B cell (primary cell): ENCODE measurements at regions of chr13 and their contacts with region 1.

Region 1: GRCh38 chr13:81017513-81018152 is 676.7 kb upstream of the SPRY2 start:
- DNase-seq: peak; percentile 26
- ATAC-seq: no peak
- H3K4me3 ChIP-seq: no peak overlapping the region
- H3K4me3 Mint-ChIP-seq: no peak overlapping the region
- H3K27ac ChIP-seq: no peak overlapping the region
- H3K27ac Mint-ChIP-seq: no peak overlapping the region
- H3K4me1 ChIP-seq: no peaks in the 10 kb centered on the region
- H3K4me1 Mint-ChIP-seq: no peaks in the 10 kb centered on the region
- H3K27me3 ChIP-seq: peaks cover 0 to 2% (median 0%) of the 10 kb centered on the region in 4 experiments
- H3K27me3 Mint-ChIP-seq: no peaks in the 10 kb centered on the region
- CTCF ChIP-seq: peak; percentile 77

Region 2: GRCh38 chr13:79679334-79679733 is 1338.3 kb before region 1 on chr13:
- CTCF ChIA-PET with region 1: interaction called, 71 read pairs
- POLR2A ChIA-PET with region 1: no interaction called
- intact Hi-C with region 1: no loop called
- DNase-seq: peak; percentile 52
- ATAC-seq: peak; percentile 36
- H3K4me3 ChIP-seq: no peak overlapping the region
- H3K4me3 Mint-ChIP-seq: no peak overlapping the region
- H3K27ac ChIP-seq: no peak overlapping the region
- H3K27ac Mint-ChIP-seq: no peak overlapping the region
- H3K4me1 ChIP-seq: no peaks in the 10 kb centered on the region
- H3K4me1 Mint-ChIP-seq: no peaks in the 10 kb centered on the region
- H3K27me3 ChIP-seq: peaks cover 0 to 2% (median 0%) of the 10 kb centered on the region in 4 experiments
- H3K27me3 Mint-ChIP-seq: peaks cover 3% of the 10 kb centered on the region
- CTCF ChIP-seq: peak; percentile 86

Region 3: DNA sequence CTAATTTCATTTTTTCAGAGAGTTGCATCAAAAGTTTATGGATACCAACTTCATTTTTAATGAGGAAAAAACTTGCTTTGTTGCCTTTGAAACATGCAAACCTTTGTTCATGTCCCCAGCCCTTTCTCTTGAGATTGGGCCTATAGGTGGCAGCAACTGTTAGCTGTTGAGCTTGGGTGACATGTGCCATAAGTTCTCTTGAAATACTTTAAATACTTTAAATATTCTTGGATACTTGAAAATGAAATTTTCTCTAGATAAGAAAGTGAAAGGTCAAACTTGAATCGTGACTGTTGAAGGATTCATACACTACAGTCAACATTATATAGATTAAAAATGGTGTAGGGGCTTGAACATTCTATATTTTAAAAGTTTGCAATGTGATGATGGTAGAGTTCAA is 1241.8 kb before region 1 on chr13:
- CTCF ChIA-PET with region 1: interaction called, 9 read pairs
- POLR2A ChIA-PET with region 1: no interaction called
- intact Hi-C with region 1: loop called (anchors 2 kb)
- DNase-seq: peak; percentile 44
- ATAC-seq: no peak
- H3K4me3 ChIP-seq: no peak overlapping the region
- H3K4me3 Mint-ChIP-seq: no peak overlapping the region
- H3K27ac ChIP-seq: no peak overlapping the region
- H3K27ac Mint-ChIP-seq: no peak overlapping the region
- H3K4me1 ChIP-seq: no peaks in the 10 kb centered on the region
- H3K4me1 Mint-ChIP-seq: no peaks in the 10 kb centered on the region
- H3K27me3 ChIP-seq: no peaks in the 10 kb centered on the region
- H3K27me3 Mint-ChIP-seq: peaks cover 5% of the 10 kb centered on the region
- CTCF ChIP-seq: peak; percentile 57

Region 4: GRCh38 chr13:79973533-79973963 is 1044.1 kb before region 1 on chr13:
- CTCF ChIA-PET with region 1: interaction called, 5 read pairs
- POLR2A ChIA-PET with region 1: no interaction called
- intact Hi-C with region 1: loop called (anchors 2 kb)
- DNase-seq: peak; percentile 24
- ATAC-seq: peak; percentile 61
- H3K4me3 ChIP-seq: no peak overlapping the region
- H3K4me3 Mint-ChIP-seq: no peak overlapping the region
- H3K27ac ChIP-seq: no peak overlapping the region
- H3K27ac Mint-ChIP-seq: no peak overlapping the region
- H3K4me1 ChIP-seq: no peaks in the 10 kb centered on the region
- H3K4me1 Mint-ChIP-seq: peaks cover 2% of the 10 kb centered on the region
- H3K27me3 ChIP-seq: no peaks in the 10 kb centered on the region
- H3K27me3 Mint-ChIP-seq: no peaks in the 10 kb centered on the region
- CTCF ChIP-seq: peak; percentile 48

Region 5: DNA sequence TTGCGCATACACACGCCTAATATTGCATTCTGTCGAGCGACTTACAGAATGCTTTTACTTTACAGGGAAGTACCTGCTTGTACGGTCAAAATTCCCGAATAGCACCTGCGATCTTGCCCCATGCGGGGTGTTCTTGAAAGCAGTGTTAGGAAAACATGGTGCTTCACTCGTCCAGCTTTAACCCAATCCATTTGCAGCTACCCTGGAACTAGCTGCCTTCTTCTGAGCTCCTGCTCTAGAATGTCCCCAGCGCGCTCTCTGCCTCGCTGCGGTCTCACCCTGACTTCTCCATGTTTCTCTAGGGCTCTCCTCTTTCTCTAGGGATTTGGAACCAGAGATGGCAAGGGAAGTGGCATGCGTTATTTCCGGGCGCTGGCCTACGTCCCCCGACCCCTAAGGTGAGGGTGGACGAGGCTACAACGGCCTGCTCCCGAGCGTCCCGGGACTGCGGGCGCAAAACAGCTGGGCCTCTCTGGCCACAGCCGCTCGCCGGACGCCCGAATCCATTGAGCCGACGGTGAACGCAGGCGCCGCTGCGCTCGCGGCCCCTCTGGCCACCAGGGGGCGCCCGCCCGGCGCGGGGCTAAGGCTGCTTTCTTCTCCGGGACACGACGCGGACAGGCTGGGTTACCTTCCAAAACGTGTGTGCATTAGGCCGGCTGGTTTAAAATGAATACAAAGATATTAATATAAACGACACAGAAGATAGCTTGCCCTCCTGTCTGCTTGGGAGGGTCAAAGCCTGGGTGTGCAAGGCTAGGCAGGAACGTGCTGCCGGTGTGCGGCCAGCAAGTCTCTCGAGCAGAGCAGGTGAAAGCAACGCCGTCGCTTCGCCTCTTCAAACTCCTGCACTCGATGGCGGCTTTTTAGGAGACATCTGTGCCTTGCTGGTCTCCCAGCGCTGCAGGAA is 674.9 kb before region 1 on chr13:
- CTCF ChIA-PET with region 1: interaction called, 13 read pairs
- POLR2A ChIA-PET with region 1: no interaction called
- intact Hi-C with region 1: no loop called
- DNase-seq: peak; percentile 79
- ATAC-seq: peak; percentile 60
- H3K4me3 ChIP-seq: peak overlapping the region; percentile 34 to 69 (median 55)
- H3K4me3 Mint-ChIP-seq: no peak overlapping the region
- H3K27ac ChIP-seq: no peak overlapping the region
- H3K27ac Mint-ChIP-seq: no peak overlapping the region
- H3K4me1 ChIP-seq: peaks cover 38 to 39% of the 10 kb centered on the region in 2 donors
- H3K4me1 Mint-ChIP-seq: peaks cover 23% of the 10 kb centered on the region
- H3K27me3 ChIP-seq: peaks cover 0 to 34% (median 17%) of the 10 kb centered on the region in 4 experiments
- H3K27me3 Mint-ChIP-seq: peaks cover 34% of the 10 kb centered on the region
- CTCF ChIP-seq: peak; percentile 96

Region 6: GRCh38 chr13:80499536-80500290 is 517.9 kb before region 1 on chr13:
- CTCF ChIA-PET with region 1: no interaction called
- POLR2A ChIA-PET with region 1: no interaction called
- intact Hi-C with region 1: no loop called
- DNase-seq: no peak
- ATAC-seq: no peak
- H3K4me3 ChIP-seq: no peak overlapping the region
- H3K4me3 Mint-ChIP-seq: no peak overlapping the region
- H3K27ac ChIP-seq: no peak overlapping the region
- H3K27ac Mint-ChIP-seq: no peak overlapping the region
- H3K4me1 ChIP-seq: no peaks in the 10 kb centered on the region
- H3K4me1 Mint-ChIP-seq: no peaks in the 10 kb centered on the region
- H3K27me3 ChIP-seq: no peaks in the 10 kb centered on the region
- H3K27me3 Mint-ChIP-seq: no peaks in the 10 kb centered on the region
- CTCF ChIP-seq: no peak